ENCODE measurements at regions of chr15 and their contacts with region 1.

Region 1: GRCh38 chr15:85485956-85486567 is 105.7 kb downstream of the AKAP13 start:
- DNase-seq: peak; percentile 76
- H3K4me3 Mint-ChIP-seq: no peak overlapping the region
- H3K27ac Mint-ChIP-seq: no peak overlapping the region
- H3K4me1 Mint-ChIP-seq: peaks cover 61% of the 10 kb centered on the region
- H3K27me3 Mint-ChIP-seq: no peaks in the 10 kb centered on the region

Region 2: DNA sequence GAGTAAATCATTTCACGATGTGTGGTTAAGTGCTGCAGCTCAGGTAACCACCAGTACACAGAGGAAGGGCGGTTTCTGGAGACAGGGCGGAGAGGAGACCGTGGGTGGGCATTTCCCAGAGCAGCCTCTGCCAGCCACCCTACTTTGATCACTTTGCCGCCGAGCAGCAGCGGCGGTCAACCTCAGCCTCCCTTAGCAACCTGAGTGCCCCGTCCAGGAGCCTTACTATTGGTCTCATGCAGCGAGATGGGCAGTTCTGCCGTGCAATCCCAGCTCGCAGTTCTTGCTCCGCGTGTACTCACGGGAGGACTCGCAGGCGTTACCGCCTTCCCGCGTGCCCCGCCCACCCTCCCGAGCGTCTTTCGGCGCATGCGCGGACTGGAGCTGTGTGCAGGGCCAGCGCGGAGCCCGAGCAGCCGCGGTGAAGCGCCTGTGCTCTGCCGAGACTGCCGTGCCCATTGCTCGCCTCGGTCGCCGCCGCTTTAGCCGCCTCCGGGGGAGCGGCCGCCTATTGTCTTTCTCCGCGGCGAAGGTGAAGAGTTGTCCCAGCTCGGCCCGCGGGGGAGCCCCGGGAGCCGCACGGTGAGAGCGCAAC is 105.7 kb before region 1 on chr15 and contains the start of gene AKAP13:
- CTCF ChIA-PET with region 1: no interaction called
- intact Hi-C with region 1: no loop called
- DNase-seq: peak; percentile 97
- H3K4me3 Mint-ChIP-seq: peak within 1 kb of the TSS; percentile 91
- H3K27ac Mint-ChIP-seq: peak within 1 kb of the TSS; percentile 90
- H3K4me1 Mint-ChIP-seq: peaks cover 51% of the 10 kb centered on the region
- H3K27me3 Mint-ChIP-seq: no peaks in the 10 kb centered on the region
- total RNA-seq, gene AKAP13: 79.4 to 83.2 TPM

Region 3: GRCh38 chr15:85504749-85505676 is 19.0 kb after region 1 on chr15:
- CTCF ChIA-PET with region 1: interaction called, 30 read pairs
- intact Hi-C with region 1: loop called (anchors 1 kb)
- DNase-seq: peak; percentile 71
- H3K4me3 Mint-ChIP-seq: no peak overlapping the region
- H3K27ac Mint-ChIP-seq: no peak overlapping the region
- H3K4me1 Mint-ChIP-seq: peaks cover 55% of the 10 kb centered on the region
- H3K27me3 Mint-ChIP-seq: no peaks in the 10 kb centered on the region

Region 4: DNA sequence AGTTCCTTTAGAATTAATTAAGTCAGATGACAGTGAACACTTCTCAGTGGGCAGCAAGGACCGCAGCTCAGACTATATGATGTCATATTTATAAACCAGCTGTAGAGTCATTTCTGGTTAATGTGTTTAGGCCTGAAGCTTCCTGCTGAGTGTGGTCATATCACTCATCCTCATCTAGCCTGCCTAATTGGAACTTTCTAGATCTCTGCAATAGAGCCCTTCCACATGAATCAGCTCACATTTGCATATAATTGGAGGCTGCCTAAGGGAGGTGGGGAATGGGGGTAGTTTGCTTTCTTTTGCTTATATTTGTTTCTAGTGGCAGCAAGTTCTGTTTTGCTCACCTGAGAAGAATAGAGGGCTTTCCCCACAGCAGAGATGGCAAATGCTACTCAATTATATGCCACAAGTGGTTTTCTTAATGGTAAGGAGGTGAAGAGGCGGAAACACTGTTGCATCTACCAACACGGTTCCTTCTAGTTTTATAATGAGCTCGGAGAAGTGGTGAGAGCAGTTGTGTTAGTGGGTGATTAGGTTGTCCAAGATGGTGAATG is 160.6 kb after region 1 on chr15:
- CTCF ChIA-PET with region 1: no interaction called
- intact Hi-C with region 1: no loop called
- DNase-seq: peak; percentile 21
- H3K4me3 Mint-ChIP-seq: no peak overlapping the region
- H3K27ac Mint-ChIP-seq: peak overlapping the region; percentile 52
- H3K4me1 Mint-ChIP-seq: peaks cover 46% of the 10 kb centered on the region
- H3K27me3 Mint-ChIP-seq: no peaks in the 10 kb centered on the region

Region 5: GRCh38 chr15:85689729-85690128 is 203.7 kb after region 1 on chr15:
- CTCF ChIA-PET with region 1: interaction called, 5 read pairs
- intact Hi-C with region 1: loop called (anchors 1 kb)
- DNase-seq: peak; percentile 76
- H3K4me3 Mint-ChIP-seq: peak overlapping the region; percentile 84
- H3K27ac Mint-ChIP-seq: peak overlapping the region; percentile 99
- H3K4me1 Mint-ChIP-seq: peaks cover 78% of the 10 kb centered on the region
- H3K27me3 Mint-ChIP-seq: no peaks in the 10 kb centered on the region

Region 6: GRCh38 chr15:85723960-85724945 is 238.2 kb after region 1 on chr15:
- CTCF ChIA-PET with region 1: no interaction called
- intact Hi-C with region 1: loop called (anchors 5 kb)
- DNase-seq: peak; percentile 41
- H3K4me3 Mint-ChIP-seq: peak overlapping the region; percentile 43
- H3K27ac Mint-ChIP-seq: peak overlapping the region; percentile 97
- H3K4me1 Mint-ChIP-seq: peaks cover 67% of the 10 kb centered on the region
- H3K27me3 Mint-ChIP-seq: no peaks in the 10 kb centered on the region

Region 7: DNA sequence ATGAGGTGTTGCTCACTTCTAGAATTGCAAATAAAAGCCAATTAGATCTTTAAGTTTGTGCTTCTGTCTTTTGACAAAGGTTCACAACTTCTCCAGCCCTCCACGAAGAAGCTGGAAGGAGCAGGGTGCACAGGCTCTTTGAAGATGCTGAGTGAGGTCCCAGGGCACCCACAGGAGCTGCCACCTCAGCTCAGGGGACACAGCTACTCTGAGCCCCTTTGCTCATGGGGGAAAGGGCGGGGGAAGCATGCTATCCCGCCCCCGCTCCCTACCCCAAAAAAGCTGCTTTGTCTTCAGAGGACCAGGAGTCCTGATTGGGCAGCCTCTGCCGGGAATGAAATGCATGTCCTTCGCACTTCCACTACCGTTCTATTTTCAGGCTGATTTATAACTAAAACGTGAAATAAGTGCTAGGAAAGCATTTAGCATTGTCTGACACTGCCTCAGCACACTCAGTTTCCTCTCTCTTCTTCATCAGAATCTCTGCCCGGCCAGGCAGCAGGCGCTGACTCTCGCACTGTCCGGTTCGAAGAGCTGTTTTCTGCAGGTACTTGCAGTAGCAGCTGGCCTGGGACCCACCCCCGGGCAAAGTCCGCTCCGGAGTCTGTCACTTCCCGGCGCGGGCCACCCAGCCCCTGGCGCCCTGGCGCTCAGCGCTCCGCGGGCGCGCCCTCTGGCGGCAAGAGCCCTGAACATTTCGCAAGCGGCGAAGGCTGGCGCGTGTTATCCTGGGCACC is 354.2 kb after region 1 on chr15:
- CTCF ChIA-PET with region 1: interaction called, 6 read pairs
- intact Hi-C with region 1: loop called (anchors 1 kb)
- DNase-seq: peak; percentile 81
- H3K4me3 Mint-ChIP-seq: peak overlapping the region; percentile 65
- H3K27ac Mint-ChIP-seq: no peak overlapping the region
- H3K4me1 Mint-ChIP-seq: no peaks in the 10 kb centered on the region
- H3K27me3 Mint-ChIP-seq: peaks cover 3% of the 10 kb centered on the region